Tibial artery (tissue), 4 donors: ENCODE measurements at regions of chr4 and their contacts with region 1.

Region 1: DNA sequence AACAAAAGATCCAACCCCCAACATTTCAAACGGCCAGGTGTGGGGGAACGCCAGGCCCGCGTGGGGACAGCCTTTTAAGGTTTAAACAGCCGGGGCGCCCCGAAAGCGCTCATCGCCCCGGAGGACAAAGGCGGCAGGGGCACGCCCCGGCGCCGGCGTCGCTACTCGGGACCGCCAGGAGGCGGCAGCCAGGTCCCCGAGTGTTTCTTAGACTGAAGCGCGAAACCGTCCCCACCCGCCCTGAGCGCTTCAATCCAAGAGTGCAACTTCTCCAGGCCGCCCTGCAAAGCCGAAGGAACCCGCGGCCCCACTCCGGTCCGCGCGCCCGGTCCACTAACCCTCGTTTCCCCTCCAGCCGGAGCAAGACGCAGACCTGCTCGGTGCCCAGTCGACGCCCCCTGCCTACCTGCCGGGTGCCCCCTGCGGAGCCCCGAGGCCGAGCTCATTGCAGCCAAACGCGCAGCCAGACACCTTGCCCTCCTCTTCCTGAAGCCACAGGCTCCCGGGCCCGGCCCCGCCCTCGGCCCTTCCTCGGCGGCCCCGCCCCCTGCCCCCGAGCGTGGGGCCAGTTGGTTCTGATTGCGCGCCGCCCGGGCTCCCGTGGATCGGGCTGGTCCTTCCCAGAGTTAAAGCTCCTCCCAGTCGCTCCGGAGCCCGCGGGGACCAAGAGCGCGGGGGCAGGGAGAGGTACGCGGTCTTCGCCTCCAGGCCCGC is at the start of gene CASP6:
- DNase-seq: peak; percentile 88 to 94
- H3K4me3 ChIP-seq: peak within 1 kb of the TSS; percentile 75 to 80
- H3K27ac ChIP-seq: peak within 1 kb of the TSS; percentile 72 to 82
- H3K4me1 ChIP-seq: peaks cover 0 to 11% (median 5%) of the 10 kb centered on the region in 4 donors
- H3K27me3 ChIP-seq: no peaks in the 10 kb centered on the region
- CTCF ChIP-seq: peak; percentile 70 to 74

Region 2: DNA sequence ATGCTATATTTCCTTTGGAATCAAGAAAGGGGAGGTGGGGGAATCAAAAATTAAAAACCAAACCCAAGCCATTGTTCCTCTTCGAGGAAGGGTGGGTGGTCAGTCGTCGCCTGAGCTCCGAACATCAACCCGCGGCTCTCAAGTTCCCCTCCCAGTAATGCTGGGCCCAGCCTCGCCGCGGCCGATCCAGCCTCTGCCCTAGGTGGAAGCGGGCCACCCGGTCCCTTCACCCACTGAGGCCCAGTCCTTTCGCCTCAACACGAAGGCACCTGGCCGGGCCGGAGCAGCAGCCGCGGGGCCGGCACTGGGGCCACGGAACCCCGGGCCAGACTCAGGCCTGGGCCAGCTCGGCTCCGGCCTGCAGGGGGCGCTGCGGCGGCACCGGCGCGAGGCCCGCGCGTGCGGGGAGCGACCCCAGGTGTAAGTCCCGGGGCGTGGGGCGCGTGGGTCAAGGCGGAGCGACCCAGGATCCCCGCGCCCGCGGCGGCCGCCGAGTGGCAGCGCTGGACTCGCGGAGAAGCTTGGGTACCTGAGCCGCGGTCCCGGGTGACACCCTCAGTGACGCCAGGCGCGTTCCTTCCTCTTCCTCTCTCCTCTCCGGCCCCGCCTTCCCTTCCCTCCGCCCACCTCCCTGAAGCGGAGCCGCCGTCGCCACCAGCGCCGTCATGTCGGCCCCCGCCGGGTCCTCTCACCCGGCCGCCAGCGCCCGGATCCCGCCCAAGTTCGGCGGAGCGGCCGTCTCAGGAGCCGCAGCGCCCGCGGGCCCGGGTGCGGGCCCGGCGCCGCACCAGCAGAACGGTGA is 269.7 kb before region 1 on chr4 and contains the start of gene SEC24B:
- intact Hi-C with region 1: loop called (anchors 5 kb)
- DNase-seq: peak; percentile 87 to 93
- H3K4me3 ChIP-seq: peak within 1 kb of the TSS; percentile 80
- H3K27ac ChIP-seq: peak within 1 kb of the TSS; percentile 92 to 93
- H3K4me1 ChIP-seq: peaks cover 0 to 52% (median 26%) of the 10 kb centered on the region in 4 donors
- H3K27me3 ChIP-seq: no peaks in the 10 kb centered on the region
- CTCF ChIP-seq: peak; percentile 73 to 91

Region 3: GRCh38 chr4:109574102-109574850 is 128.8 kb before region 1 on chr4:
- intact Hi-C with region 1: no loop called
- DNase-seq: no peak
- H3K4me3 ChIP-seq: no peak overlapping the region
- H3K27ac ChIP-seq: no peak overlapping the region
- H3K4me1 ChIP-seq: no peaks in the 10 kb centered on the region
- H3K27me3 ChIP-seq: no peaks in the 10 kb centered on the region
- CTCF ChIP-seq: no peak

Region 4: DNA sequence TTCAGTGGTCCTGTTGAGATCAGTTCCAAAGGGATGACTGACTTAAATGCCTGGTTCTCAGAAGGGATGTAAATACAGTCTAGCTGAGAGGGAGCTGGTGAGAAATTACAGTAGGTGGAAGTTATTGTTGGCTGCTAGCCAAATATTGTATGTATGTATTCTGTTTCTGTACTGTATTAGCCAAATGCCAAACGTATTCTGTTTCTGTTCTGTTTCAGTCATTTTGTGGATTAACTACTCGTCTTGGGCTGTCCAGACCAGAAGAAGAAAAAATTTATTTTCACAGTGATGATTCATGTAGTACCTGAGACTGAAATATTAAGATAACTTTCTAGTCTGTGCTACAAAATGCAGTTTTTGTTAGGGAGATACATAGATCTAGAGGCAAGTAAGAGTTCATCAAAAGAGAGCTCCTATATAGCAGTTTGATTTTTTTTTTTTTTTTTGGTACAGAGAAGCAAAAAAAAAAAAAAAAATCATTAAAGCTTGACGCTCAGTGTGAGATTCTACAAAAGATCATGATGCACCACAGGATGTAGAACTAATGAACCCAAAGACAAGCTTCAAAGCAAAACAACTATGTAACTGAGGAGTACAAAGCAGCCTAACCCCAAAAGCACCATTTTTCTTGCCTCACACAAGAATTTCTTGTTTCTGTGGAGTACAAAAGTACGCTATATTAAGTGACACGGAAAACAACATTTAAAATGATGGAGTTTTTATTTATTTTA is 54.7 kb before region 1 on chr4:
- intact Hi-C with region 1: no loop called
- DNase-seq: no peak
- H3K4me3 ChIP-seq: no peak overlapping the region
- H3K27ac ChIP-seq: no peak overlapping the region
- H3K4me1 ChIP-seq: no peaks in the 10 kb centered on the region
- H3K27me3 ChIP-seq: no peaks in the 10 kb centered on the region
- CTCF ChIP-seq: no peak

Region 5: DNA sequence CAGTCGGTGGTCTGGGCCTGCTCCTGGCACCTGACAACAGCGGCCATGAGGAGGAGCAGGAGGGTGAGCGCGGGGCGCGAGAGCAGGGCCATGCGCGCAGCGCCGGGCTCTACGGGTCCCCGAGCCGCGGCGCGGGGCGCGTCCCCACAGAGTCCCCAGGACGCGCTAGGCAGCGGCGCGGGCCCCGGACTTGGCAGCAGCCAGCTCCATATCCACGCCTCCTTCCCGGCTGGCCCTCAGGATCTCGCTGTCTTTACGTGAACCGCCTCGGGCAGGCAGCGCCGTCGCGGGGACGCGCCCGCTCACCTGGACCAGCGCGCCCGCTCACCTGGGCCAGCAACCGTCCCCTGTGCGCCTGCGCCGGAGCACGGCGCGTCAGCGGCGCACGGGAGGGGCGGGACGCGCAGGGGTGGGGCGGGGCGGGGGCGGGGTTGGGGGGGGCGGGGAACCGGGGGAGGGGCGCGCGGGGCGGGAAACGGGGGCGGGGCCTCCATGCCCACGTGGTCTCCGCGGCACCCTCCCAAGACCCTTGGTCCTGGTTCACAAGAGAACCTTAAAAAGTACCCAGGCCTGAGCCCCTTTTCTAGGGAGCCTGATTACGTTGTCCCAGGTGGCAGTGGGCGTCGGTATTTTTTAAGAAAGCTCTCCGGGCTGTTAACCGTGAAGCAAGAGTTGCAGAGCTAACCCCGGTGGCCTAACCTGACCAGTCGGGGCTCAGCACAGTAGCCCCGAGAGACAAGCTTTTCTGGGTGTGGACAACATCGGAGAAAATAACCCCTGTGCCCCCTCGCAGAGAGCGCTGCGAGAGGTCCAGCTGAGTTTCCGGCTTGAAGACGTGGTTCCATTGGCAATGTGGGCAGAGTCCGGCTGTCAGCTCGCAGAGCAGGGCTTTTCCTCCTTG is 26.9 kb after region 1 on chr4 and contains the start of gene PLA2G12A:
- intact Hi-C with region 1: loop called (anchors 2 kb)
- DNase-seq: peak; percentile 41 to 81
- H3K4me3 ChIP-seq: peak within 1 kb of the TSS; percentile 64 to 87
- H3K27ac ChIP-seq: peak within 1 kb of the TSS; percentile 66 to 79
- H3K4me1 ChIP-seq: peaks cover 0 to 16% (median 10%) of the 10 kb centered on the region in 4 donors
- H3K27me3 ChIP-seq: no peaks in the 10 kb centered on the region
- CTCF ChIP-seq: no peak

Region 6: GRCh38 chr4:109815151-109816081 is 112.3 kb after region 1 on chr4 and contains the start of gene GAR1:
- intact Hi-C with region 1: loop called (anchors 5 kb)
- DNase-seq: peak; percentile 89 to 91
- H3K4me3 ChIP-seq: peak within 1 kb of the TSS; percentile 69 to 87
- H3K27ac ChIP-seq: peak within 1 kb of the TSS; percentile 79 to 82
- H3K4me1 ChIP-seq: peaks cover 0 to 18% (median 12%) of the 10 kb centered on the region in 4 donors
- H3K27me3 ChIP-seq: no peaks in the 10 kb centered on the region
- CTCF ChIP-seq: no peak